ENCODE measurements at regions of chr4 and their contacts with region 1.

Region 1: GRCh38 chr4:104966349-104967033 is 180.2 kb upstream of the TET2 start:
- H3K4me3 Mint-ChIP-seq: peak overlapping the region; percentile 66
- H3K27ac Mint-ChIP-seq: peak overlapping the region; percentile 91
- H3K4me1 Mint-ChIP-seq: peaks cover 43% of the 10 kb centered on the region
- H3K27me3 Mint-ChIP-seq: no peaks in the 10 kb centered on the region

Region 2: GRCh38 chr4:104879367-104879766 is 87.1 kb before region 1 on chr4:
- intact Hi-C with region 1: loop called (anchors 10 kb)
- H3K4me3 Mint-ChIP-seq: peak overlapping the region; percentile 10
- H3K27ac Mint-ChIP-seq: no peak overlapping the region
- H3K4me1 Mint-ChIP-seq: peaks cover 18% of the 10 kb centered on the region
- H3K27me3 Mint-ChIP-seq: peaks cover 6% of the 10 kb centered on the region

Region 3: DNA sequence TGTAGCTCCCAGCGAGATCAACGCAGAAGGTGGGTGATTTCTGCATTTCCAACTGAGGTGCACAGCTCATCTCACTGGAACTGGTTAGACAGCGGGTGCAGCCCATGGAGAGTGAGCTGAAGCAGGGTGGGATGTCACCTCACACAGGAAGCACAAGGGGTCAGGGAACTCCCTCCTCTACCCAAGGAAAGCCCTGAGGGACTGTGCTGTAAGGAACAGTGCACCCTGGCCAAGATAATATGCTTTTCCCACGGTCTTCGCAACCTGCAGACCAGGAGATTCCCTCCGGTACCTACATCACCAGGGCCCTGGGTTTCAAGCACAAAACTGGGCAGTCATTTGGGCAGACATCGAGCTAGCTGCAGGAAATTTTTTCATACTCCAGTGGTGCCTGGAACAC is 36.2 kb before region 1 on chr4:
- intact Hi-C with region 1: no loop called
- H3K4me3 Mint-ChIP-seq: no peak overlapping the region
- H3K27ac Mint-ChIP-seq: peak overlapping the region; percentile 84
- H3K4me1 Mint-ChIP-seq: peaks cover 25% of the 10 kb centered on the region
- H3K27me3 Mint-ChIP-seq: no peaks in the 10 kb centered on the region

Region 4: DNA sequence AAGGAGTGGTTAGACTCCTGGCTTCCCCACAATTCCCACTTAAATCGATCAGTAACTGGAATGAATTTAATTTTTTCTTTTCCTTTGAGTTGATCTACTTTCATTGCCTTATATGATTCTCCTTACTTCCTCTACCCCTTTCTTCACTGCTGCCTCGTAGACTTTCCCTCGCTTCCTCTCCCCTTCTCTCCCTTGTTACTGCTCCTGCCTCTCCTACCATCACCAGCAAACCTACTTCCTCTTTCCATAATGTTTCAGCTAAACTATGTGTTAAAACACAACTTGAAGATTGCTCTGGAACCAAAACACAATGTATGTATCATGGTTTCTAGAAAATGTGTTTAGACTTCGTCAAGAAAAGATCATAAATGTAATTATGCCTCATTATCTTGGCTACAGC is 48.1 kb after region 1 on chr4:
- intact Hi-C with region 1: loop called (anchors 1 kb)
- H3K4me3 Mint-ChIP-seq: peak overlapping the region; percentile 6
- H3K27ac Mint-ChIP-seq: peak overlapping the region; percentile 85
- H3K4me1 Mint-ChIP-seq: peaks cover 18% of the 10 kb centered on the region
- H3K27me3 Mint-ChIP-seq: no peaks in the 10 kb centered on the region

Region 5: DNA sequence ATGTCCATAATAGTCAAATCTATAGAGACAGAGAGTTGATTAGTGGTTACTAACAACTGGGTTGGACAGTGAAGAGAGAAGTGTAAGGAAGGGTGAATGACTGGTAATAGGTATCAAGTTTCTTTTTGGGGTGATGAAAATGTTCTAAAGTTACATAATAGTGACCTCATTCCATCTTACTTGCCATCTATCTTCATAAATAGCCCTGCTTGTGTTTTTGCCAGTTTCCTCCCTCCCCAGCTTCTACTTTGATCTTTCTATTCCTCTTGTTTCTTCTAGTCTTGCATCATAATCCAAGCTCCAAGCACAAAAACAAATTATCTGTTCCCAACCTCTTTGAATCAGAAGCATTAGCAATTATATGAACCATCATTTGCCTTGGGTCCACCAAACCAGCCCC is 139.9 kb after region 1 on chr4:
- intact Hi-C with region 1: loop called (anchors 5 kb)
- H3K4me3 Mint-ChIP-seq: no peak overlapping the region
- H3K27ac Mint-ChIP-seq: peak overlapping the region; percentile 89
- H3K4me1 Mint-ChIP-seq: peaks cover 23% of the 10 kb centered on the region
- H3K27me3 Mint-ChIP-seq: no peaks in the 10 kb centered on the region

Region 6: DNA sequence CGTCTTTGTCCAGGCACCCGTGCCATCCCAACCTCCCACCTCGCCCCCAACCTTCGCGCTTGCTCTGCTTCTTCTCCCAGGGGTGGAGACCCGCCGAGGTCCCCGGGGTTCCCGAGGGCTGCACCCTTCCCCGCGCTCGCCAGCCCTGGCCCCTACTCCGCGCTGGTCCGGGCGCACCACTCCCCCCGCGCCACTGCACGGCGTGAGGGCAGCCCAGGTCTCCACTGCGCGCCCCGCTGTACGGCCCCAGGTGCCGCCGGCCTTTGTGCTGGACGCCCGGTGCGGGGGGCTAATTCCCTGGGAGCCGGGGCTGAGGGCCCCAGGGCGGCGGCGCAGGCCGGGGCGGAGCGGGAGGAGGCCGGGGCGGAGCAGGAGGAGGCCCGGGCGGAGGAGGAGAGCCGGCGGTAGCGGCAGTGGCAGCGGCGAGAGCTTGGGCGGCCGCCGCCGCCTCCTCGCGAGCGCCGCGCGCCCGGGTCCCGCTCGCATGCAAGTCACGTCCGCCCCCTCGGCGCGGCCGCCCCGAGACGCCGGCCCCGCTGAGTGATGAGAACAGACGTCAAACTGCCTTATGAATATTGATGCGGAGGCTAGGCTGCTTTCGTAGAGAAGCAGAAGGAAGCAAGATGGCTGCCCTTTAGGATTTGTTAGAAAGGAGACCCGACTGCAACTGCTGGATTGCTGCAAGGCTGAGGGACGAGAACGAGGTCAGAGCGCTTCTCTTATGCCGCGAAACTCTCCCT is 180.0 kb after region 1 on chr4 and contains the start of gene TET2:
- intact Hi-C with region 1: loop called (anchors 2 kb)
- H3K4me3 Mint-ChIP-seq: peak within 1 kb of the TSS; percentile 89
- H3K27ac Mint-ChIP-seq: peak within 1 kb of the TSS; percentile 100
- H3K4me1 Mint-ChIP-seq: peaks cover 54% of the 10 kb centered on the region
- H3K27me3 Mint-ChIP-seq: no peaks in the 10 kb centered on the region